ENCODE measurements at regions of chr5 and their contacts with region 1.

Region 1: GRCh38 chr5:140602147-140602546 is 30.8 kb downstream of the CD14 start:
- DNase-seq: peak in 2 of 3 donors; percentile 82 to 86
- H3K4me3 ChIP-seq: peak overlapping the region in 1 of 3 experiments; percentile 28
- H3K4me3 Mint-ChIP-seq: peak overlapping the region; percentile 55 to 60
- H3K27ac ChIP-seq: peak overlapping the region; percentile 94 to 95
- H3K27ac Mint-ChIP-seq: peak overlapping the region; percentile 94 to 100 (median 99)
- H3K4me1 ChIP-seq: peaks cover 71 to 95% of the 10 kb centered on the region in 2 donors
- H3K4me1 Mint-ChIP-seq: peaks cover 66% of the 10 kb centered on the region
- H3K27me3 ChIP-seq: no peaks in the 10 kb centered on the region
- H3K27me3 Mint-ChIP-seq: peaks cover 0 to 5% (median 0%) of the 10 kb centered on the region in 3 donors
- CTCF ChIP-seq: no peak

Region 2: DNA sequence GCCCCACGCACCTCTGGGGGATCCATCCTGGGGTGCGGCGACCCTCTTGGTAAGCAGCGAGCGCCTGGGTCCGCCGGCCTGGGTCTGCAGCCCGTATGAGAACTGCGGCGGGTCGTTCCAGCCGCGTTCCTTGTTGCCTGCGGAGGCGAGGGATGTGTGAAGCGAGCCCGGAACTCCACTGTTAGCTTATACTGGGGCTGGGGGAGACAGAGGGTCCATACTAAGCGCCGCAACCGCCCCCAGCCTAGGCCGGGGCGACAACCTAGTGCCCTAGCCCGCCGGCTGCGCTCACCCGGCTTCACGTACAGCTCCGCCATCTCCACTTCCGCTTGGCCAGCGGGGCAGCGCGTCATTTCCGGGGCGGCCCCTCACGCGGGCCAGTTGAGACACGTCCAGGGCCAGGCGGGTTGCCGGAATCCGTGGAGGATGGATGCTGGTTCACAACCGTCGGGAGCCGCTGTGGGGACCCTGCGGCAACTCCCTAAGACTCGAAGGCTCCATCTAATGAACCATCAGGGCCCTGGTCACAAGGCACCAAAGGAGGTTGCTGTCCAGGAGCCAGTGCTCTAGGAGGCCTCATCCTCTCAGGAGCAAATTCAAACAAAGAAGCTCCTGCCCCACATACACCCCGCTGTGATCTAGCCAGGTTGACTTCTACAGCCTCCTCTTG is 44.9 kb before region 1 on chr5 and contains the start of gene SRA1:
- intact Hi-C with region 1: loop called in 1 of 2 experiments (anchors 5 kb)
- DNase-seq: peak; percentile 92 to 94 (median 93)
- H3K4me3 ChIP-seq: peak within 1 kb of the TSS; percentile 82 to 88 (median 87)
- H3K4me3 Mint-ChIP-seq: peak within 1 kb of the TSS; percentile 86 to 96
- H3K27ac ChIP-seq: peak within 1 kb of the TSS; percentile 88 to 94
- H3K27ac Mint-ChIP-seq: peak within 1 kb of the TSS; percentile 89 to 99 (median 98)
- H3K4me1 ChIP-seq: peaks cover 45 to 61% of the 10 kb centered on the region in 2 donors
- H3K4me1 Mint-ChIP-seq: peaks cover 58% of the 10 kb centered on the region
- H3K27me3 ChIP-seq: no peaks in the 10 kb centered on the region
- H3K27me3 Mint-ChIP-seq: peaks cover 0 to 5% (median 0%) of the 10 kb centered on the region in 3 donors
- CTCF ChIP-seq: no peak
- polyA plus RNA-seq, gene SRA1: 72.4 to 97.2 (median 80.8) TPM

Region 3: DNA sequence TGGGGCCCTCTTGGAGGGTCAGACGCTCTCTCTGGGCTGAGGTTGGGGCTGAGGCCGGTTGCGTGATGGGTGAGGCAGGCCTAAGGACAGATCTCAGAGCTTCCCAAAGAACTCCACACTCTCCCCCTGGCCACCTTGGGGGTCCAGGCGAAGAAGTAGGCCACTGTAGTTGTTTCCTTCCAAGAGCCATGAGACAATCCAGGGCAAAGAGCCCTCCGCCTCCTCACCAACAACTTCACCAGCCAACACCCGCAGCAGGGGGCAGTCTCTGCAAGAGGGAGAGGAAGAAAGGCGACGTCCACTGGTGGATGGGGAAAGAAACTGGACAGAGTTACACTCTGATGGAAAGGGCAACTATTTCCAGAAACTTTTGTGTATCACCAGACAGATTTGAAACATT is 26.8 kb before region 1 on chr5:
- intact Hi-C with region 1: no loop called
- DNase-seq: peak; percentile 71 to 82 (median 71)
- H3K4me3 ChIP-seq: no peak overlapping the region
- H3K4me3 Mint-ChIP-seq: no peak overlapping the region
- H3K27ac ChIP-seq: peak overlapping the region in 1 of 2 donors; percentile 39
- H3K27ac Mint-ChIP-seq: peak overlapping the region in 6 of 7 donors; percentile 14 to 87 (median 66)
- H3K4me1 ChIP-seq: peaks cover 22 to 42% of the 10 kb centered on the region in 2 donors
- H3K4me1 Mint-ChIP-seq: peaks cover 35% of the 10 kb centered on the region
- H3K27me3 ChIP-seq: no peaks in the 10 kb centered on the region
- H3K27me3 Mint-ChIP-seq: peaks cover 0 to 2% (median 2%) of the 10 kb centered on the region in 3 donors
- CTCF ChIP-seq: peak; percentile 84

Measured in CD14-positive monocyte (primary cell).